ENCODE measurements at regions of chr15 and their contacts with region 1.

Region 1: DNA sequence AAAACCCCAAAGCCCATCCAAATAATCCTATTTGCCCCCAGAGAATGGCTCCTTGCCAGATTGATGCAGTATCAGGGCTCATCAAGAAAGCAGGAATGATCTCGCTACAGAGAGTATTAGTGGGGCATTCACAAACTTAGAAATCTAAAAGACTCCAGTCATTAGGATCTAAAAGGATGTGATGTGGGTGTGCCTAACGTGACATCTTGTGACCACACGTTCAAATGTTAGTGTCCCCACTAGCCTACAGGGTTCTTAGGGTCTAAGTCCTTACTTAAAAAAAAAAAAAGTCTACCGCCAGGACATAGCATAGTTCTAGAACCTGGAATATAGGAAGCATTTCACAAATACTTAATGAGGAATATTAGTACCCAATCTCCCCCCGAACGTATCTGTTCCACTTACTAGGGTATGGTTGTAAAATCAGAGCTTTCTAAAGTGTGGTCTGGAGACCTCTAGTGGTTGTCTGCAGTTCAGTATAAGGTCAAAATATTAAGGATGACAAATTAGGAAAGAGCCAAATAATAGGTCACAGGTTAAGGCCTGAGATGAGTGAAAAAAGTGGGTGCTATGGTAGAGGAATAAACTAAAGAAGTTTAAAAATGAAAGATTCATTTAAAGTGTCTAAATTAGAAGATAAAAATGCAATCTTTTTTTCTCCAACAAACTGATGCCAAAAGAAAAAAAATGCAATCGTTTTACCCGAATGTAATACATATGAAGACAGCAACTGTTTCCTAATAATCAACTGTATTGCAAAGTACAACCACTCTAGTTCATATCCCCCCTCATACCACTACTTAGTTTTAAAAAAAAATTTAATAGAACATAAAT is 4.2 kb upstream of the CHRM5 start:
- DNase-seq: peak; percentile 44
- H3K4me3 ChIP-seq: no peak overlapping the region
- H3K27ac ChIP-seq: no peak overlapping the region
- H3K4me1 ChIP-seq: peaks cover 3% of the 10 kb centered on the region
- H3K27me3 ChIP-seq: no peaks in the 10 kb centered on the region
- CTCF ChIP-seq: peak; percentile 34 to 45
- POLR2A ChIP-seq: no peak

Region 2: GRCh38 chr15:33234014-33234461 is 730.0 kb before region 1 on chr15:
- CTCF ChIA-PET with region 1: no interaction called
- POLR2A ChIA-PET with region 1: no interaction called
- dilution Hi-C with region 1: no loop called
- intact Hi-C with region 1: loop called (anchors 10 kb)
- DNase-seq: peak; percentile 41
- H3K4me3 ChIP-seq: no peak overlapping the region
- H3K27ac ChIP-seq: no peak overlapping the region
- H3K4me1 ChIP-seq: no peaks in the 10 kb centered on the region
- H3K27me3 ChIP-seq: peaks cover 9% of the 10 kb centered on the region in 2 experiments
- CTCF ChIP-seq: peak; percentile 21 to 39
- POLR2A ChIP-seq: no peak

Region 3: GRCh38 chr15:33639978-33640377 is 324.1 kb before region 1 on chr15:
- CTCF ChIA-PET with region 1: no interaction called
- POLR2A ChIA-PET with region 1: no interaction called
- dilution Hi-C with region 1: no loop called
- intact Hi-C with region 1: no loop called
- DNase-seq: no peak
- H3K4me3 ChIP-seq: no peak overlapping the region
- H3K27ac ChIP-seq: no peak overlapping the region
- H3K4me1 ChIP-seq: no peaks in the 10 kb centered on the region
- H3K27me3 ChIP-seq: peaks cover 4 to 10% of the 10 kb centered on the region in 2 experiments
- CTCF ChIP-seq: no peak
- POLR2A ChIP-seq: no peak

Region 4: DNA sequence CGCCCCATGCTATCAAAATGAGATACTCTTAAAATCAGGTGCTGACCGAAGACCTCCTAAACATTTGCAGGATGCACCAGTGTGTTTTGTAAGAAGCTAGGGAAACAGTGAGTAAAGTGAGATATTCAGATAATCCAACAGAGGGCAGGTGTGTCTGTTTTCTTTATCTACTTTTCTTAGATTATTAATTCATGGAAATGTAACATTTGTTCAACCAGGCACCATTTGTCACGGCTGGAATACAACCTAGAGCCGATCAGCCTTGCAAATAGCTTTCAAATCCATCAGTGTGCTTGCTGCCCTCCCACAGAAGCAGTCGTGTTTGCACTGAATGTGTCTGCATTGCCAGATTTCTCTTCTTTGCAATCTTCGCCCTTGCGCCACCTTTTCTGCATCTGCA is 197.7 kb before region 1 on chr15:
- CTCF ChIA-PET with region 1: interaction called, 6 read pairs
- POLR2A ChIA-PET with region 1: no interaction called
- dilution Hi-C with region 1: no loop called
- intact Hi-C with region 1: loop called (anchors 10 kb)
- DNase-seq: no peak
- H3K4me3 ChIP-seq: no peak overlapping the region
- H3K27ac ChIP-seq: no peak overlapping the region
- H3K4me1 ChIP-seq: no peaks in the 10 kb centered on the region
- H3K27me3 ChIP-seq: no peaks in the 10 kb centered on the region
- CTCF ChIP-seq: no peak
- POLR2A ChIP-seq: no peak

Region 5: GRCh38 chr15:34049112-34049511 is 85.1 kb after region 1 on chr15:
- CTCF ChIA-PET with region 1: no interaction called
- POLR2A ChIA-PET with region 1: no interaction called
- dilution Hi-C with region 1: no loop called
- intact Hi-C with region 1: no loop called
- DNase-seq: no peak
- H3K4me3 ChIP-seq: no peak overlapping the region
- H3K27ac ChIP-seq: no peak overlapping the region
- H3K4me1 ChIP-seq: no peaks in the 10 kb centered on the region
- H3K27me3 ChIP-seq: peaks cover 0 to 1% of the 10 kb centered on the region in 2 experiments
- CTCF ChIP-seq: no peak
- POLR2A ChIP-seq: no peak